ENCODE measurements at regions of chrX and their contacts with region 1.

Region 1: DNA sequence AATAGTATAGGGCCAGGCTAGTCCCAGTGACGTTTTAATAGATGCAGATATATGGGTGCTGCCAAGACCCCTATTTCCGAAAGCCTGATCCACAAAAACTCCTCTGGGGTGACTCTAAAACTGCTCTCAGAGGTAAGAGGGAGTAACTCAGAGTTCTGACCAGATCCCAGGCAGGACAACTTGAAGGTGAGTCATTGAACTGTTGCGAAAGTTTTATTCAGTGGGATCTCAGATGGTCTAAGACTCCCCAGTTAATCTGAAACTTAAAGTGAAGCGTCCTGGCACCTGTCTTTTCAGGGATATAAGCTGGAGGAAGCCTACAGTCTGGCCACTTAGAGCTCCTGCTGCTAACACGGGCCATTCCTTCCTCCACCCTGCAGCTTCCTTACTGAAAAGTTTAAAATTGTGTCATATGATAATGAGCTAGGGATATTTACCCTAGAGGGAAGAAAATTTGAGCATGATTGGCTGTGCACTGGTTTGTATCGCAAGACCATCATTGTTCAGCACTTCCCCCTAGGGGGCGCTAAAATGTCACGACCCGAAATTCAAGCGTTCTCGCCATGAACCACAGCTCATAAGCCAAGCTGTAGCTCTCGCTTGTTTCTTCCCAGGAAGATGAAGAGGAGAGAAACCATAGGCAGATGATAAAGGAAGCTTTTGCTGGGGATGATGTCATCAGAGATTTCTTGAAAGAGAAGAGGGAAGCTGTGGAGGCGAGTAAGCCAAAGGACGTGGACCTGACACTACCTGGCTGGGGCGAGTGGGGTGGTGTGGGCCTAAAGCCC is 19.5 kb downstream of the UTP14A start:
- DNase-seq: peak; percentile 35 to 81 (median 70)
- ATAC-seq: peak; percentile 75
- H3K4me3 ChIP-seq: no peak overlapping the region
- H3K4me3 Mint-ChIP-seq: no peak overlapping the region
- H3K27ac ChIP-seq: no peak overlapping the region
- H3K27ac Mint-ChIP-seq: no peak overlapping the region
- H3K4me1 ChIP-seq: no peaks in the 10 kb centered on the region
- H3K4me1 Mint-ChIP-seq: peaks cover 4% of the 10 kb centered on the region
- H3K27me3 ChIP-seq: no peaks in the 10 kb centered on the region
- H3K27me3 Mint-ChIP-seq: no peaks in the 10 kb centered on the region
- CTCF ChIP-seq: peak; percentile 51

Region 2: GRCh38 chrX:129957241-129958082 is 32.0 kb after region 1 on chrX:
- CTCF ChIA-PET with region 1: interaction called, 11 read pairs
- POLR2A ChIA-PET with region 1: interaction called, 3 read pairs
- intact Hi-C with region 1: no loop called
- DNase-seq: peak in 3 of 9 experiments; percentile 3 to 59 (median 52)
- ATAC-seq: peak; percentile 12
- H3K4me3 ChIP-seq: peak overlapping the region; percentile 43 to 49
- H3K4me3 Mint-ChIP-seq: peak overlapping the region; percentile 69
- H3K27ac ChIP-seq: peak overlapping the region; percentile 23 to 49
- H3K27ac Mint-ChIP-seq: peak overlapping the region; percentile 55
- H3K4me1 ChIP-seq: peaks cover 22% of the 10 kb centered on the region
- H3K4me1 Mint-ChIP-seq: peaks cover 37% of the 10 kb centered on the region
- H3K27me3 ChIP-seq: no peaks in the 10 kb centered on the region
- H3K27me3 Mint-ChIP-seq: no peaks in the 10 kb centered on the region
- CTCF ChIP-seq: no peak

Region 3: DNA sequence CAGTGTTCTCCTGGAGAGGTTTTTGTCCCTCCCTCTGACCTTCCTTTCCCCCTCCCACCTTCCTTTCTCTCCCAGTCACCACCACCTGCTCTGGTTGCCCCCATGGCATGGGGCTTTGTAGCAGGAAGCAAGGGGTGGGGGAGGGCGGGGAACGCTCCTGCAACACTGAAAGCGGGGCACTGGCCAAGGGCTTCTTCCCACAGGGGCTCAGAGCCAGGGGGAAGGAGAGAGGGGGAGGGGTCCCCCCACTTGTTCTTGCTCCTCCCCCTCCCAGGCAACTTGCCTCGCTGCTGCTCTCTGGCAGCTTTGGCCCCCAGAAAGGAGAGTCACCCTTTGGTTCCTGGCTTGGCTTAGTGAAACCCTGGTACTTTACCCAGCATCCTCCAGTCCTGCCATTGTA is 105.3 kb after region 1 on chrX:
- CTCF ChIA-PET with region 1: interaction called, 220 read pairs
- POLR2A ChIA-PET with region 1: interaction called, 4 read pairs
- intact Hi-C with region 1: loop called (anchors 1 kb)
- DNase-seq: no peak
- ATAC-seq: no peak
- H3K4me3 ChIP-seq: no peak overlapping the region
- H3K4me3 Mint-ChIP-seq: no peak overlapping the region
- H3K27ac ChIP-seq: no peak overlapping the region
- H3K27ac Mint-ChIP-seq: no peak overlapping the region
- H3K4me1 ChIP-seq: no peaks in the 10 kb centered on the region
- H3K4me1 Mint-ChIP-seq: peaks cover 2% of the 10 kb centered on the region
- H3K27me3 ChIP-seq: no peaks in the 10 kb centered on the region
- H3K27me3 Mint-ChIP-seq: no peaks in the 10 kb centered on the region
- CTCF ChIP-seq: no peak

Region 4: GRCh38 chrX:130047411-130047810 is 121.9 kb after region 1 on chrX:
- CTCF ChIA-PET with region 1: no interaction called
- POLR2A ChIA-PET with region 1: no interaction called
- intact Hi-C with region 1: no loop called
- DNase-seq: no peak
- ATAC-seq: no peak
- H3K4me3 ChIP-seq: no peak overlapping the region
- H3K4me3 Mint-ChIP-seq: no peak overlapping the region
- H3K27ac ChIP-seq: no peak overlapping the region
- H3K27ac Mint-ChIP-seq: no peak overlapping the region
- H3K4me1 ChIP-seq: no peaks in the 10 kb centered on the region
- H3K4me1 Mint-ChIP-seq: no peaks in the 10 kb centered on the region
- H3K27me3 ChIP-seq: no peaks in the 10 kb centered on the region
- H3K27me3 Mint-ChIP-seq: no peaks in the 10 kb centered on the region
- CTCF ChIP-seq: no peak

Region 5: GRCh38 chrX:130060122-130061069 is 134.9 kb after region 1 on chrX:
- CTCF ChIA-PET with region 1: interaction called, 44 read pairs
- POLR2A ChIA-PET with region 1: no interaction called
- intact Hi-C with region 1: loop called (anchors 1 kb)
- DNase-seq: peak; percentile 54 to 91 (median 80)
- ATAC-seq: peak; percentile 87
- H3K4me3 ChIP-seq: peak overlapping the region; percentile 48 to 53
- H3K4me3 Mint-ChIP-seq: peak overlapping the region; percentile 66
- H3K27ac ChIP-seq: no peak overlapping the region
- H3K27ac Mint-ChIP-seq: no peak overlapping the region
- H3K4me1 ChIP-seq: peaks cover 7% of the 10 kb centered on the region
- H3K4me1 Mint-ChIP-seq: peaks cover 12% of the 10 kb centered on the region
- H3K27me3 ChIP-seq: no peaks in the 10 kb centered on the region
- H3K27me3 Mint-ChIP-seq: no peaks in the 10 kb centered on the region
- CTCF ChIP-seq: peak; percentile 67

Region 6: DNA sequence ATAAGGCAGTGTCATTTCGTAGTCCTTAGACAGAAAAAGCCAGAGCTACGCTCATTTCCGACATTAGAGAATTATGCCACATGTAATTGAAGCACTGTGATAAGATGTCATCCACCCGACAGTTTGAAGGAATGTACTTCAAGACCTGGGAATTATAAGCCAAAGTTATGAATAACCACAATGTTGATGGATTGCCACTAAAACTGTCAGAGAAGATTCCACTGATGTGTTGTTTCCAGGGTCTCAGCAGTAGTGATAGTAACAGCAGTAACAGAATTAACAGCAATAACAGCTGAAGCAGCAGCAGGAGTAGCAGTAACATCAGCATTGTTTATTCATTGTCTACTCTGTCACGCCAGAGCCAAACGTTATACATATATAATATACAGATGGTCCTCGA is 271.0 kb after region 1 on chrX:
- CTCF ChIA-PET with region 1: interaction called, 3 read pairs
- POLR2A ChIA-PET with region 1: no interaction called
- intact Hi-C with region 1: loop called (anchors 1 to 5 kb)
- DNase-seq: no peak
- ATAC-seq: no peak
- H3K4me3 ChIP-seq: no peak overlapping the region
- H3K4me3 Mint-ChIP-seq: no peak overlapping the region
- H3K27ac ChIP-seq: no peak overlapping the region
- H3K27ac Mint-ChIP-seq: no peak overlapping the region
- H3K4me1 ChIP-seq: no peaks in the 10 kb centered on the region
- H3K4me1 Mint-ChIP-seq: peaks cover 2% of the 10 kb centered on the region
- H3K27me3 ChIP-seq: no peaks in the 10 kb centered on the region
- H3K27me3 Mint-ChIP-seq: no peaks in the 10 kb centered on the region
- CTCF ChIP-seq: no peak

Measured in CD8-positive, alpha-beta T cell (primary cell).